AG04450 (cell line): ENCODE measurements at regions of chr15 and their contacts with region 1.

Region 1: GRCh38 chr15:81023483-81024264 is 23.0 kb downstream of the TLNRD1 start:
- DNase-seq: no peak
- H3K4me3 ChIP-seq: no peak overlapping the region
- H3K27ac ChIP-seq: no peak overlapping the region
- H3K27me3 ChIP-seq: no peaks in the 10 kb centered on the region
- CTCF ChIP-seq: no peak

Region 2: GRCh38 chr15:80934761-80935221 is 88.9 kb before region 1 on chr15:
- CTCF ChIA-PET with region 1: no interaction called
- POLR2A ChIA-PET with region 1: interaction called, 12 read pairs
- DNase-seq: no peak
- H3K4me3 ChIP-seq: no peak overlapping the region
- H3K27ac ChIP-seq: no peak overlapping the region
- H3K27me3 ChIP-seq: no peaks in the 10 kb centered on the region
- CTCF ChIP-seq: no peak

Region 3: GRCh38 chr15:81419332-81419943 is 395.8 kb after region 1 on chr15:
- CTCF ChIA-PET with region 1: no interaction called
- POLR2A ChIA-PET with region 1: no interaction called
- DNase-seq: peak; percentile 10
- H3K4me3 ChIP-seq: no peak overlapping the region
- H3K27ac ChIP-seq: no peak overlapping the region
- H3K27me3 ChIP-seq: no peaks in the 10 kb centered on the region
- CTCF ChIP-seq: no peak